ENCODE measurements at regions of chr3 and their contacts with region 1.

Region 1: DNA sequence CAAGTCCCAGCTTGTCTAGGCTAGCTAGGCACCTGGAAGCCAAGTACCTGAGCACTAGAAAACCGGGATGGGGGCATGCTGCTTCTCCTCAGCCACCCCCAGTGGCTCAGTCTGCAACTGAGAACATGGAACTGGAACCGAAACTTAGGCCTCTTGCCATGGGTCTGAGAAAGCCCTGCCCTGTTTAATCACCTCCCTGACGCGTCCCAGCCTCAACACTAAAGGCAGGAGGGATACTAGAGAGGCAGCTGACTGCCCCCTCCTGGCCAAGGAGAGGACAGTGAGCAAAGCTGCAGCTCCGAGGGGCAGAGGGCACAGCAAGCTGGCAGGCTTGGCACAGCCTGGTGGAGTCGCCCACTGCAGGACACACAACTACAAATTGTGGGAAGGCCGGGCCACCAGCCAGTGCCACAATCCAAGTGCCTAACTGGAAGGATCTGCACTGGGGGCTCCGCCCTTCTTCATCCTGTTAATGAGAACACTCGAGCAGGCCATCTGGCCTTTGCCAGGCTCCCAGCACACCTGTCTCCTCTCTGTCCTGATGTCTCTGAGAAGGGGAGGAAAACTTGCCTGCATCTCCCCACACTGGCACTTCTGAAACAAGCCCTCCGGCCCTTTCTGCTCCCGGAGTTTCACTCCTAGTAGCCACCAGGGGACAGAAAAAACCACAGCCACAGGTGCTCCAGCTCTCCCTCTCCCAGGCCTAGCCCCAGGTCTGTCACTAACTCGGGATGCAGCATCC is 53.7 kb downstream of the BDH1 start:
- DNase-seq: peak in 1 of 2 experiments; percentile 65
- H3K4me3 ChIP-seq: no peak overlapping the region
- H3K27ac ChIP-seq: no peak overlapping the region
- H3K4me1 ChIP-seq: peaks cover 40% of the 10 kb centered on the region
- H3K27me3 ChIP-seq: no peaks in the 10 kb centered on the region
- CTCF ChIP-seq: peak; percentile 90

Region 2: DNA sequence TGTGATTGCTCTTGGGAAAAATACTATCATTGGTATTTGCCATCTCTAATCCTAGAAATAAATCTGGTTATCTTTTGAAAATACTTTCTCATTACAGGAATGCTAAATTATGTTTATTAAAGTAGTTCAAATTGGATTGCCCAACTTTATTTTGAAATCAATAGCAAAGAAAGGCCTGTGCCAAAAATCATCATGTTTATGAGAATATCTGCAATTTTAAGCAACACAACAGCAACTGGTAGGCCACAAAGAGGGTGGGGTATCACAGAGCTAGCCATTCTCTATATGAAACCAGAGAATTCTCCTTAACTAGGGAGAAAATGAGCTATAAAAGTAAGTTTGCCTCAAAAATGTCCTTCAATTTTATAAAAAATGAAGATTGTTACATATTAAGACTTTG is 1152.0 kb before region 1 on chr3:
- CTCF ChIA-PET with region 1: no interaction called
- POLR2A ChIA-PET with region 1: no interaction called
- intact Hi-C with region 1: no loop called
- DNase-seq: no peak
- H3K4me3 ChIP-seq: no peak overlapping the region
- H3K27ac ChIP-seq: no peak overlapping the region
- H3K4me1 ChIP-seq: peaks cover 9% of the 10 kb centered on the region
- H3K27me3 ChIP-seq: no peaks in the 10 kb centered on the region
- CTCF ChIP-seq: no peak

Region 3: DNA sequence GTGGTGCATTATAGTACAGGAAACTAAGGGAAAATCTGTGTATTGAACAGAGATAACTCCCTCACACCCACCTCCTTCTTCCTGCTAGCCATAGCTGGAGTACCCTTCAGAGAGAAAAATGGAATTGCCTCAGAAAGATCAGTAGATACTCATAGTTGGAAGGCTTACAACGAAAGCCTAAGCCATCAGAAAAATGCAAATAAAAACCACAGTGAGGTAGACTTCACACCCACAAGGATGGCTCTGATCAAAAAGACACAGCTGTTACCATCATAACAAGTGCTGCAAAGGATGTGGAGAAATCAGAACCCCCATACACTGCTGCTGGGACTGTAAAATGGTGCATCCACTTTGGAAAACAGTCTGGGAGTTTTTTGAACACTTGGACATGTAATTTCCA is 196.2 kb before region 1 on chr3:
- CTCF ChIA-PET with region 1: no interaction called
- POLR2A ChIA-PET with region 1: interaction called, 10 read pairs
- intact Hi-C with region 1: no loop called
- DNase-seq: no peak
- H3K4me3 ChIP-seq: no peak overlapping the region
- H3K27ac ChIP-seq: peak overlapping the region; percentile 88
- H3K4me1 ChIP-seq: peaks cover 71% of the 10 kb centered on the region
- H3K27me3 ChIP-seq: no peaks in the 10 kb centered on the region
- CTCF ChIP-seq: no peak

Region 4: DNA sequence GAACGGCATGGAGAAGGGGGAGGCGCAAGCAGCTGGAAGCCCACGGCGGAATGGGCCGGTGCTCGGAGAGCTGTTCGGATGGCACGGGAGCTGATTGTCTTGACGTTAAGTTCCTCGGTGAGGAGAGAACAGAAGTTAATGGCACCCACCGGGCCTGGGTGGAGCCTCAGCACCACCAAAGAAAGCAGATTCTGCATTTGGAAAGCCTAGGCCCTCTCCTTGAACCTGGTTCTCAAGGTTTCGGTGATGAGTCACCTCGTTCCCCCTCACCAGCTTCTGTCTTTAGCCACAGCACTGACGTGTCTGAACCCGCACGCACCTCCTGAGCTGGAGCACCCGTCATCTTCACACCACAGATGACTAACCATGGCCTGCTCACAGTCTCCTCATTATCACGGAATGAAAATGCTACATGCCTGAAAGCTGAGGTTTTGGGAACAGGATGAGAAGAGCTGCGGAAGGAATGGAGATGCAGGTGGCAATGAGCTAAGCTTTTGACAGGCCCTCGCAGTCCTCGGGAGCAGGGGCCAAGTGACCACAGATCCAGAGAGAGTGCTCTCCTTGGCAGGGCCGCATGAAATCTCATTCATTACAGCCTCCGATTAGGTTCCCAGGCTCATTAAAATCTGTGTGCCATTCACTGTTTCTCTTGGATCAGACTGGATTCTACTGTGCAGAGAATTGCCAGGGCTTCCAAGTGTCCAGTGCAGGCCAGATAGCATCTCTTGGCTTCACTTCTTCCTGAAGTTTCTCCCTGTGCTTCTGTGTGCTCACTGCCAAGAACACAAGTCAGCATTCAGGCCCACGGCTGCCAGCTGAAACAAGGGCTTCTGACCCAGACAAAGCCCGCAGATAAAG is 107.4 kb before region 1 on chr3:
- CTCF ChIA-PET with region 1: interaction called, 3 read pairs
- POLR2A ChIA-PET with region 1: no interaction called
- intact Hi-C with region 1: loop called (anchors 1 kb)
- DNase-seq: peak; percentile 91 to 97
- H3K4me3 ChIP-seq: no peak overlapping the region
- H3K27ac ChIP-seq: peak overlapping the region; percentile 70
- H3K4me1 ChIP-seq: peaks cover 15% of the 10 kb centered on the region
- H3K27me3 ChIP-seq: peaks cover 14% of the 10 kb centered on the region
- CTCF ChIP-seq: no peak

Region 5: GRCh38 chr3:197466586-197467399 is 35.3 kb before region 1 on chr3:
- CTCF ChIA-PET with region 1: interaction called, 7 read pairs
- POLR2A ChIA-PET with region 1: no interaction called
- intact Hi-C with region 1: loop called (anchors 2 kb)
- DNase-seq: peak; percentile 41 to 58
- H3K4me3 ChIP-seq: peak overlapping the region; percentile 29; the same call in 1 of the 2 replicates
- H3K27ac ChIP-seq: peak overlapping the region; percentile 52
- H3K4me1 ChIP-seq: peaks cover 52% of the 10 kb centered on the region
- H3K27me3 ChIP-seq: no peaks in the 10 kb centered on the region
- CTCF ChIP-seq: no peak

Region 6: DNA sequence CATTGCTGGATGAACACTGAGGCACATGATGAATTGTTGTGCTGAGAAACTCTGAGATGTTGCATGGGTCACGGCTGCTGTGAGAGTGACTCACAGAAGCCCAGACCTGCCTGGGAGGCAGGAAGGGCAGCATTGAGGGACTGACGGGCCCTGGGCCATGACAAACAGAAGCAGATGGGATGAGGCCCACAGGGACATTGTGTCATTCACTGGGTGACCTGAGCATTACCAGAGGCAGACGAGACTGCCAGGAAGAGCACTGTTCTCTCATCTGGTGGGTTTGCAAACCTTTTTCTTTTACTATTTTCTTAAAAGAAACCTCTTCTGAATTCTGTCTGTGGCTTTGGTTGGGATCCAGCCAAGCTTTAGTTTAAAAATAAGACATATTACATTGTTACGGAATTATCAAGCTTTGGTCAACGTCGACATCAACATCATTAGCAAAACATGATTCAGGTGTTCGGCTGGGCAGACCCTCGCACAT is 14.1 kb before region 1 on chr3:
- CTCF ChIA-PET with region 1: interaction called, 6 read pairs
- POLR2A ChIA-PET with region 1: interaction called, 9 read pairs
- intact Hi-C with region 1: loop called (anchors 1 kb)
- DNase-seq: peak; percentile 94 to 97
- H3K4me3 ChIP-seq: peak overlapping the region; percentile 3; the same call in 1 of the 2 replicates
- H3K27ac ChIP-seq: peak overlapping the region; percentile 71
- H3K4me1 ChIP-seq: peaks cover 67% of the 10 kb centered on the region
- H3K27me3 ChIP-seq: no peaks in the 10 kb centered on the region
- CTCF ChIP-seq: no peak

Region 7: DNA sequence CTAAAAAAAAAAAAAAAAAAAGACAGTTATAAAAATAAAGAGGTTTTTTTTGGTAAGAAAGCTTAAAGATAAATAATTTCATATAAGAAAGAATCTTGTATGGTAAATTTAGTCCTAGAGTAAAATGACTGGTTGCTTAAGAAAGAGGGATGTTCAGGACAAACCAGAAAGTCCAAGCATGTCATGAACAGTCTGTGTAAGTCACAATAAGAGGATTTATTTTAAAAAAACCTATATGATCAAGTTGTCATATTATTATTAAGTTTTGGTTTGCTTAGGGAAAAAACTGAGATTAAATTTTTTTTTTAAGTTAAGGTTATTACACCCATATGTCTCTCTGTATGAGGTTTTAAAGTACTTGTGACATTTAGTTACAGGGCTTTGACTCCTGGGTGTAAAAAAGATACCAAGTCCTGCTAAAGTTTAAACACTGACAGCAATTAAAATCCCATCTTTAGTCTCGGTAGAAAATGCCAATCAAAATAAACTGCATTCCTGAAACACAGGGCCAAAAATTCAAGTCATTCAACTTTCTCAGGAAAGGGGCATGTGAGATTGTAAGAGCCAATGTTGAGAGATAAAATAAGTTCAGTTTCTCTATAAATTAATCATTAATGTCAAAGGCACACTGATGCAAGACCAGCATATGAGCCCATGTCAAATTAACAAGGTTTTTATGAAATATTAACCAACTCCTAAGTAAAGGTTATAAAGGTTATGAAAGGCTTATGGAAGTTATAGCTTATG is 62.2 kb after region 1 on chr3:
- CTCF ChIA-PET with region 1: no interaction called
- POLR2A ChIA-PET with region 1: no interaction called
- intact Hi-C with region 1: no loop called
- DNase-seq: no peak
- H3K4me3 ChIP-seq: no peak overlapping the region
- H3K27ac ChIP-seq: no peak overlapping the region
- H3K4me1 ChIP-seq: 0 out of 2 replicates have a peak, but pooled peaks cover 6% of the 10 kb centered on the region
- H3K27me3 ChIP-seq: no peaks in the 10 kb centered on the region
- CTCF ChIP-seq: no peak

Measured in PC-9 (cell line).